SK-N-SH (cell line): ENCODE measurements at regions of chr18 and their contacts with region 1.

Region 1: GRCh38 chr18:47215554-47216138 is 35.8 kb downstream of the SKOR2 start:
- DNase-seq: peak; percentile 54
- H3K4me3 ChIP-seq: peak overlapping the region in 1 of 2 experiments; percentile 32; a peak in 1 of 4 replicates
- H3K27ac ChIP-seq: no peak overlapping the region
- H3K4me1 ChIP-seq: no peaks in the 10 kb centered on the region
- H3K27me3 ChIP-seq: no peaks in the 10 kb centered on the region
- CTCF ChIP-seq: peak; percentile 67
- EP300 ChIP-seq: no peak
- RAD21 ChIP-seq: peak; percentile 97

Region 2: DNA sequence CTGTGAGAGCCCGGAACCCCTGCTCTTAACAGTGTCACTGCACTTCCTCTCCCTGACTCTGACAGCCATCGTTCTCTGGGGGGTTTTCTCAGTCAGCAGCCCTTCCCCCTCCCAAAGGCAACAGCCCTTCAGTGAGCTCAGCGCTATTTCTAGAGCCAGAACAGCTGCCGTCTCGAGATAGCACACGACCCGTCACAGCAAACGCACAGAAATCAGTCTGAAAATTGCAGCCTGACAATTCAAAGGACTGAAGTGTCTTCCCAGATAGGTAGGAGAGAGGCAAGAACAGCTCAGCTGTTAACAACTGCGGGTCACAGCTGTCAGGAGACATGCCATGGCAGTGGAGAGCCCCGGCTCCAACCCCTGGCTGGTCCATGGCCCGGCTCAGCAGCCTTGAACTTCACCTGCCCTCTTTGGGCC is 504.2 kb before region 1 on chr18:
- CTCF ChIA-PET with region 1: no interaction called
- POLR2A ChIA-PET with region 1: no interaction called
- DNase-seq: peak; percentile 37
- H3K4me3 ChIP-seq: no peak overlapping the region
- H3K27ac ChIP-seq: no peak overlapping the region; a peak in 1 of 4 replicates
- H3K4me1 ChIP-seq: peaks cover 0 to 20% of the 10 kb centered on the region in 2 experiments; a peak in 1 of 4 replicates
- H3K27me3 ChIP-seq: no peaks in the 10 kb centered on the region; the same call in 1 of the 2 replicates
- CTCF ChIP-seq: no peak
- EP300 ChIP-seq: no peak
- RAD21 ChIP-seq: no peak

Region 3: GRCh38 chr18:47100214-47100831 is 115.3 kb before region 1 on chr18:
- CTCF ChIA-PET with region 1: interaction called, 15 read pairs
- POLR2A ChIA-PET with region 1: no interaction called
- DNase-seq: peak; percentile 51
- H3K4me3 ChIP-seq: no peak overlapping the region
- H3K27ac ChIP-seq: no peak overlapping the region
- H3K4me1 ChIP-seq: no peaks in the 10 kb centered on the region
- H3K27me3 ChIP-seq: no peaks in the 10 kb centered on the region
- CTCF ChIP-seq: peak; percentile 75
- EP300 ChIP-seq: no peak
- RAD21 ChIP-seq: peak; percentile 91

Region 4: GRCh38 chr18:47247036-47247832 is 31.6 kb after region 1 on chr18:
- CTCF ChIA-PET with region 1: interaction called, 15 read pairs
- POLR2A ChIA-PET with region 1: no interaction called
- DNase-seq: peak; percentile 90
- H3K4me3 ChIP-seq: peak overlapping the region in 1 of 2 experiments; percentile 9; a peak in 1 of 4 replicates
- H3K27ac ChIP-seq: no peak overlapping the region
- H3K4me1 ChIP-seq: peaks cover 0 to 7% of the 10 kb centered on the region in 2 experiments; a peak in 1 of 4 replicates
- H3K27me3 ChIP-seq: peaks cover 51% of the 10 kb centered on the region
- CTCF ChIP-seq: peak; percentile 41
- EP300 ChIP-seq: no peak
- RAD21 ChIP-seq: peak; percentile 32

Region 5: DNA sequence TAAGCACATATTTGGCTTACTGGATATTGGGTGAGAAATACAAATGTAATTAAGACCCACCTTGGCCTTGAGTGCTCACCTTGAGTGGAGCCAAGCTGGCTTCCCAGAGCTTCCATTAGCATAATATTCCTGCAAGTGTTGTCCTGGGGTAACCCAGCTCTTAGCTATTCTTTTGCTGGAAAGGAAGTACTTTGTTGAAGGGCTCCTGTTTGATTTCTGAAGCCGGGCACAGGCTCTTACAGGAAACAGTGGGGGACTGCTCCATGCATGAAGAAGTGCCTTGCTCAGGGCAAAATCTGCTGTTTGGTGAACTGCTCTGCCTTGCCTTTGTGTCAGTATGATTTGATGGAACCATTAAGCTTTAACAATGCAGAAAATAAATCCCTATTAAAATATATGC is 389.4 kb after region 1 on chr18:
- CTCF ChIA-PET with region 1: no interaction called
- POLR2A ChIA-PET with region 1: no interaction called
- DNase-seq: no peak
- H3K4me3 ChIP-seq: no peak overlapping the region
- H3K27ac ChIP-seq: no peak overlapping the region
- H3K4me1 ChIP-seq: no peaks in the 10 kb centered on the region; a peak in 1 of 4 replicates
- H3K27me3 ChIP-seq: no peaks in the 10 kb centered on the region
- CTCF ChIP-seq: no peak
- EP300 ChIP-seq: no peak
- RAD21 ChIP-seq: no peak

Region 6: GRCh38 chr18:47737956-47738355 is 522.3 kb after region 1 on chr18:
- CTCF ChIA-PET with region 1: interaction called, 10 read pairs
- POLR2A ChIA-PET with region 1: no interaction called
- DNase-seq: no peak
- H3K4me3 ChIP-seq: no peak overlapping the region
- H3K27ac ChIP-seq: no peak overlapping the region
- H3K4me1 ChIP-seq: no peaks in the 10 kb centered on the region
- H3K27me3 ChIP-seq: no peaks in the 10 kb centered on the region
- CTCF ChIP-seq: no peak
- EP300 ChIP-seq: no peak
- RAD21 ChIP-seq: no peak

Region 7: GRCh38 chr18:47756364-47757016 is 540.8 kb after region 1 on chr18:
- CTCF ChIA-PET with region 1: interaction called, 101 read pairs
- POLR2A ChIA-PET with region 1: no interaction called
- DNase-seq: peak; percentile 75
- H3K4me3 ChIP-seq: no peak overlapping the region; a peak in 1 of 4 replicates
- H3K27ac ChIP-seq: no peak overlapping the region
- H3K4me1 ChIP-seq: no peaks in the 10 kb centered on the region
- H3K27me3 ChIP-seq: no peaks in the 10 kb centered on the region
- CTCF ChIP-seq: peak; percentile 90
- EP300 ChIP-seq: no peak
- RAD21 ChIP-seq: peak; percentile 86